ENCODE measurements at regions of chr7 and their contacts with region 1.

Region 1: GRCh38 chr7:71511361-71511807 is 379.4 kb downstream of the GALNT17 start:
- DNase-seq: peak; percentile 15 to 51
- H3K4me3 ChIP-seq: no peak overlapping the region
- H3K27ac ChIP-seq: no peak overlapping the region
- H3K4me1 ChIP-seq: peaks cover 2 to 7% (median 6%) of the 10 kb centered on the region in 4 experiments; a peak in 5 of 7 replicates
- H3K27me3 ChIP-seq: no peaks in the 10 kb centered on the region
- CTCF ChIP-seq: peak; percentile 6 to 98 (median 68)
- EP300 ChIP-seq: no peak
- POLR2A ChIP-seq: no peak
- RAD21 ChIP-seq: peak; percentile 73 to 83

Region 2: GRCh38 chr7:71193099-71193810 is 318.1 kb before region 1 on chr7:
- CTCF ChIA-PET with region 1: no interaction called
- POLR2A ChIA-PET with region 1: no interaction called
- DNase-seq: no peak
- H3K4me3 ChIP-seq: no peak overlapping the region
- H3K27ac ChIP-seq: no peak overlapping the region
- H3K4me1 ChIP-seq: no peaks in the 10 kb centered on the region
- H3K27me3 ChIP-seq: no peaks in the 10 kb centered on the region
- CTCF ChIP-seq: no peak
- EP300 ChIP-seq: no peak
- POLR2A ChIP-seq: no peak
- RAD21 ChIP-seq: no peak

Region 3: DNA sequence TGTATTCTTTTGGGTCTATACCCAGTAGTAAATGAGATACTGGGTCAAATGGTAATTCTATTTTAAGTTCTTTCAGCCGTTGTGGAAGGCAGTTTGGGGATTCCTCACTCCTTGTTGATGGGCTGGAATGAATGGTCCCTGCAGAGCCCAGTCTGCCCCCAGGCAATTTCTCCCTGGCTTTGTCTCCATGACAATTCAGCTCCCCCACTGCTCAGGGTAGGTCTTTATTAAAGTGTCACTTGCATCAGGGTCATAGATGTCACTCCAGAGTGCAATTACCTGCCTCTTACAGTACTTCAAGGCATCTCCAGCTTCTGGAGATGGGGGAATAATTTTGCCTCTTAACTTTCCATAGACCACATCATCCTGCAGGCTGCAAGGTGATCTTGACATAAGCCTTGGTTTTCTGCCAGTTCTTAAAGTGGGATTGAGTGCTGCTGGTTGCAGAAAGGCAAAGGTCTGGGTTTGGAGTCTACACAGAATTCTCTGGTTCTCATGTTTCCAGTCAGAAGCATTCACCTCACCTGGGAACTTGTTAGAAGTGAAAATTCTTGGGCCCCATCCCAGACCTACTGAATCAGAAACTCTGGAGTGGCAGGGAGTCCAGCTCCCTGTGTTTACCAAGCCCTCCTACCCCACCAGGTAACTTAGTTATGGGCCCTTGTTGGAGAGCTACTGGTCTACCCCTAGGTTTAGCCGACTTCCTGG is 62.9 kb after region 1 on chr7:
- CTCF ChIA-PET with region 1: no interaction called
- POLR2A ChIA-PET with region 1: no interaction called
- DNase-seq: peak in 1 of 2 experiments; percentile 21
- H3K4me3 ChIP-seq: no peak overlapping the region
- H3K27ac ChIP-seq: no peak overlapping the region
- H3K4me1 ChIP-seq: peaks cover 0 to 4% (median 1%) of the 10 kb centered on the region in 4 experiments; a peak in 2 of 7 replicates
- H3K27me3 ChIP-seq: no peaks in the 10 kb centered on the region
- CTCF ChIP-seq: no peak
- EP300 ChIP-seq: no peak
- POLR2A ChIP-seq: no peak
- RAD21 ChIP-seq: no peak

Region 4: DNA sequence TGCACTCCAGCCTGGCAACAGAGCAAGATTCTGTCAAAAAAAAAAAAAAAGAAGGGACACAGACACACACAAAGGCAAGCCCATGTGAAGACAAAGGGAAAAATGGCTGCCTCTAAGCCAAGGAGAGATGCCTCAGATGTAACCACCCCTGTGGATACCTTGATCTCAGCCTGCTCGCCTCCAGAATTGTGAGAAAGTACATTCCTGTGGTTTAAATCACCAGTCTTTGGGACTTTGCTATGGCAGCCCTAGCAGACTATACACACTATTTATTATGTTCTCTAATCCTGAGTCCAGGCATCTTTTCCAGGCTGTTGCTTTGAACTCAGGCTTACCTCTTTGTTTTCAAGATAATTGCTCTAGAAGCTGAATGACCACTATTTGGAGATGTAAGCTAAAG is 114.8 kb after region 1 on chr7:
- CTCF ChIA-PET with region 1: no interaction called
- POLR2A ChIA-PET with region 1: no interaction called
- DNase-seq: no peak
- H3K4me3 ChIP-seq: no peak overlapping the region
- H3K27ac ChIP-seq: no peak overlapping the region
- H3K4me1 ChIP-seq: peaks cover 0 to 1% (median 0%) of the 10 kb centered on the region in 4 experiments; a peak in 1 of 7 replicates
- H3K27me3 ChIP-seq: no peaks in the 10 kb centered on the region
- CTCF ChIP-seq: no peak
- EP300 ChIP-seq: no peak
- POLR2A ChIP-seq: no peak
- RAD21 ChIP-seq: no peak

Region 5: DNA sequence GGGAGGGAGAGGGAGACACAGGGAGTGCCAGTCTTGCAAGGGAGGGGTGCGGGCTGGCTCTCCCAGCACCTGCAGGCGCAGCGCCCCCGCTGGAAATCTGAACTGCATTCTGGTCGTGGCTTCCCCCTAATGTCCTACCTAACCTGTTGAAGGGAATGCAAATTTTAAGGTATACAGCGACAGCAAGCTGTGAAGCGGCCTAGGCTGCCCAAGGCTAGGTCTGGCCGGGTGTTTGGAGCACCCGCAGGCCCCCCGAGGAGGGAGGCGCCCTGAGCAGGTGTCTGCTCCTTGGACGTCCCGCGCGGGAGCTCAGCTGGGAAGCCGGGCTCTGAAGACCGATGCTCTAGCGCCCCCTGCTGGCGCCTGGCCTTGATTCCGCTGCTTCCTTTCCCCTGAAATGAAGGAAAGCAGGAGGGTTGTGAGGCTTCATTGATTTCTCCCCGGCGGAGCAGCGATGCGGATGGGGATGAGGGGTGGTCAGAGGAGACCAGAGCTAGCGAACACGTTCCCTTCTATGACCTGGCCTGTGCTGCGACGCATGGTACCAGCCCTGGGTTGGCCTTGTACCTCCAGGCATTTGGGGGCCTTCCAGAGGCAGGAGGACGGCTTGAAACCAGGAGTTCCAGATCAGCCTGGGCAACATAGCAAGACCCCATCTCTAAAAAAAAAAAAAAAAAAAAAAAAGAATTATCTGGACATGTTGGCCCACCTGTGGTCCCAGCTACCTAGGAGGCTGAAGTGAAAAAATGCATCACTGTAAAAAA is 221.9 kb after region 1 on chr7:
- CTCF ChIA-PET with region 1: interaction called, 61 read pairs
- POLR2A ChIA-PET with region 1: no interaction called
- DNase-seq: peak; percentile 87 to 99
- H3K4me3 ChIP-seq: peak overlapping the region in 3 of 4 experiments; percentile 34 to 57 (median 53); a peak in 7 of 8 replicates
- H3K27ac ChIP-seq: no peak overlapping the region
- H3K4me1 ChIP-seq: peaks cover 0 to 4% (median 1%) of the 10 kb centered on the region in 4 experiments; a peak in 4 of 7 replicates
- H3K27me3 ChIP-seq: no peaks in the 10 kb centered on the region
- CTCF ChIP-seq: peak; percentile 83 to 85 (median 83)
- EP300 ChIP-seq: peak in 1 of 2 experiments; percentile 46; a peak in 1 of 3 replicates
- POLR2A ChIP-seq: no peak
- RAD21 ChIP-seq: peak; percentile 90 to 94